Activated T-helper 1 cell treated with anti-CD3 and anti-CD28 coated beads, Interleukin-12 subunit alpha, Interleukin-12 subunit beta, Interleukin-2, Interleukin-4 antibody, amounts not matched to agents 30 ng/mL and 10 ng/mL and 1 ng/mL, durations not matched to agents 14 hours and 24 hours and 36 hours (primary cell): ENCODE measurements at regions of chr4 and their contacts with region 1.

Region 1: DNA sequence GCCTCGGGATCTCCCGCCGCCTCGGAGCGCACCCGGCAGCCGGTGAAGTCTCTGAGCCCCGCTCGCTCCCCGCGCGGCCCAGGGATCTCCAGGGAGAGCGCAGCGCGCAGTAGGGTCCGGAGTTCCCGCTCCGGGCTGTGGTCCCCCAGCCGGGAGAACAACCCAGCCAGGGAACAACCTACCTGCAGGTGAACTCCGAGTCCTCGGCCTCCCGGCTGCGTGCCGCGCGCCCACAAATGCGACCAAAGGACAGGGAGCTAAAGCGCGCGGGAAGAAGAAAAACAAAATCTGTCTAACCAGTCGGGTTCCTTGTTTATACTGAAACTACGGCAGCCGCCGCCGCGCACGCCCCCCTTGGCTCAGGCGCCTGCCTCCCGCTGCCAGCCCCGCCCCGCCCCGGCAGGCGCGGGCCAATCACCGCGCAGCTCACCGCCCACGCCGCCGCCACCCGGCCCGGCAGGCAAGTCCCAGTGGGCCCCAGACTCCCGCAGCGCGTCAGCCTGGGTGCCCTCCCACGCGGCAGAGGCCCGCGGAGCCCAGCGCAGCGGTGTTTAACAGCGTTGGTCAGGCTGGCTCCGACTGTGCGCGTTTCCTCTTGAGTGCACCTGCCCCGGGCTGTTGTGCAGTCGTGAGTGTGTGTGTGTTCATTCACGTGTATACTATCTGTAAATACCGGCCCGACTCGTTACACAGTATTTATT is at the start of gene RASGEF1B:
- DNase-seq: peak; percentile 91
- H3K4me3 Mint-ChIP-seq: peak within 1 kb of the TSS; percentile 93
- H3K27ac Mint-ChIP-seq: peak within 1 kb of the TSS; percentile 92
- H3K4me1 Mint-ChIP-seq: peaks cover 50% of the 10 kb centered on the region
- H3K27me3 Mint-ChIP-seq: peaks cover 22% of the 10 kb centered on the region
- total RNA-seq, gene RASGEF1B: 3.6 and 3.7 TPM in 2 replicates

Region 2: GRCh38 chr4:81494031-81494431 is 22.3 kb after region 1 on chr4:
- intact Hi-C with region 1: loop called (anchors 1 kb)
- DNase-seq: no peak
- H3K4me3 Mint-ChIP-seq: peak overlapping the region; percentile 50
- H3K27ac Mint-ChIP-seq: peak overlapping the region; percentile 25
- H3K4me1 Mint-ChIP-seq: peaks cover 43% of the 10 kb centered on the region
- H3K27me3 Mint-ChIP-seq: peaks cover 10% of the 10 kb centered on the region

Region 3: DNA sequence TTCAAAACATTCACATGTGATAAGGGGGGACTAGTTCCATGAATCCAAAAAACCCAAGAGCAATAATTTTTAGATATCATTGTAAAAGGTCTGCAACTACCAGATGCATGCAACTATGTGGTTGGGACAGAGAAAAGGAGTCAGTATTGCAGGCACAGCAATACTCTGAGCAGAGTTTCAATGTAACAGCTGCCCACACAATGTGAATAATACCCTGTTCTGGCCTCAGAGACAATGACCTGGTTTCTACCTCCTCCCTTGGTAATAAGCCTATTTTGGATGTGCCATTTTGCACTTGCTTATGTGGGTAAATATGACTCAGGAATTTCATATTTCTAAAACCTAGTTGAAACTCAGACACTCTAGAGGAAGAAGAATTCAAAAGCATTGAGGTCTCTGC is 194.8 kb after region 1 on chr4:
- intact Hi-C with region 1: loop called (anchors 5 kb)
- DNase-seq: no peak
- H3K4me3 Mint-ChIP-seq: no peak overlapping the region
- H3K27ac Mint-ChIP-seq: no peak overlapping the region
- H3K4me1 Mint-ChIP-seq: peaks cover 10% of the 10 kb centered on the region
- H3K27me3 Mint-ChIP-seq: no peaks in the 10 kb centered on the region

Region 4: DNA sequence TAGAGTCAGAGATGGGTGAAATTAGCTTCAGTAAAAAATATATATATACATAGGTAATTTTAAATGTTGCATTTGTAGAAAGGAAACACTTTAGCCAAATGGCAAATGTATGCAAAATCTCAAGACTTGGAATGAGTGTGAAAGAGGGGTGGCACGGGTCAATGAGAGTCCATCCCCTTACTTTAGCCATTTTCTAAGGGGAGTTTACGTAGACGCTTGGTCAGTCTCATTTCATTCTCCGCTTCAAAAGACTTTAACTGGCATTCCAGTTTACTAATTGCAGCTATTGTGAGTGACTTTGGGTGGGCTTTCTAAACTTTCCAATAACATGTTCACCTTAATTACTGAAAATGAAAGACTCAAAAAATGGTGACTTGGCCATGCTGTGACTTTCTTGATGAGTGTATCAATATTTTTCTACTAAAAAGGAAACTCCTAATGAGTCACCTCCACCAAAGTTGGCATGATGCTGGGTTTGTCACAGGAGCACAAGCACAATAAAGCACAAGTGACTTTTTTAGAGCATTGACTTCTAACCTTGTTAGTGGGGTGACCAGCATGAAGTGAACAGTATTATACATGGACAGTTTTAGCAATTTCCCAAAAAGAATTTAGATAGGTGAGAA is 356.0 kb after region 1 on chr4:
- intact Hi-C with region 1: loop called (anchors 1 kb)
- DNase-seq: no peak
- H3K4me3 Mint-ChIP-seq: no peak overlapping the region
- H3K27ac Mint-ChIP-seq: peak overlapping the region; percentile 11
- H3K4me1 Mint-ChIP-seq: peaks cover 13% of the 10 kb centered on the region
- H3K27me3 Mint-ChIP-seq: peaks cover 2% of the 10 kb centered on the region

Region 5: GRCh38 chr4:82268050-82268825 is 796.5 kb after region 1 on chr4:
- intact Hi-C with region 1: loop called (anchors 1 kb)
- DNase-seq: peak; percentile 20
- H3K4me3 Mint-ChIP-seq: no peak overlapping the region
- H3K27ac Mint-ChIP-seq: peak overlapping the region; percentile 6
- H3K4me1 Mint-ChIP-seq: peaks cover 10% of the 10 kb centered on the region
- H3K27me3 Mint-ChIP-seq: peaks cover 7% of the 10 kb centered on the region

Region 6: DNA sequence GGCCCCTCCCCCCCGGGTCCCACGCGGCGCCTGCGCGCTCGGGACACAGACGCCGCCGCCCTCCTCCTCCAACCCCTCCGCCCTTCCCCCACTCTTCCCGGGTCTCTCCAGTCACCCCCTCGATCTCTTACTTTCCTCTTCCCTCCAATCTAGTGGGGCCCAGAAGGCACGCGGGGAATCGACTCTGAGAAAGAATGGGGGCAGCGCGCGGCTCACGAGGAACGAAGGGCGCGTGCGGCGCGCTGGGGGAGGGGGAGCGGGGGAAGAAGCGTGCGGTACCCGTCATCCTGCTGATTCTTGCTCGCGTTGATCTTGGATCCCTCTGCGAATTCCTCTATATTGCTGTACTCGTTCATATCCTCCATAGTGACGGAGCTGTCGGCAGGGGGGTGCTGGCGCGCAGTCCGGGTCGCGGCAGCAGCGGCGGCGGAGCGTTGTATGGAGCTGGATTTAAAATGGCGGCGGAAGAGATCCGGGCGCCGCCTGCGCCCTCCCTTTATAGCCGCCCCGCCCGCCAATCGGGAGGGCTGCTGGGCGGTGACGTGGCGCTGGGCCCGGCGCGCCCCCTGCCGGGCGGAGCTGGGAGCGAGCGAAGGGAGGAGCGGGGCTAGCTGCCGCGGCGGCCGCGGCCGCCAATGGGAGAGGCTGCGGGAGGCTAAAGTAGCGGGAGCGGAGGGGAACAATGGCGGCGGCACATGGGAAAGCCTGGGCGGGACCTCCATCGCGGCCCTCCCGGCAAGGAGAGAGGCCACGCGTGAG is 957.4 kb after region 1 on chr4:
- intact Hi-C with region 1: loop called (anchors 5 kb)
- DNase-seq: peak; percentile 90
- H3K4me3 Mint-ChIP-seq: peak overlapping the region; percentile 99
- H3K27ac Mint-ChIP-seq: peak overlapping the region; percentile 99
- H3K4me1 Mint-ChIP-seq: peaks cover 69% of the 10 kb centered on the region
- H3K27me3 Mint-ChIP-seq: no peaks in the 10 kb centered on the region